Activated CD8-positive, alpha-beta memory T cell treated with anti-CD3 and anti-CD28 coated beads, Interleukin-2, amount 10 ng/mL, durations not matched to agents 7 days and 5 days (primary cell): ENCODE measurements at regions of chr2 and their contacts with region 1.

Region 1: GRCh38 chr2:181241797-181242196 is 215.4 kb upstream of the ITGA4 start:
- DNase-seq: peak; percentile 68
- ATAC-seq: peak; percentile 74
- H3K4me3 Mint-ChIP-seq: peak overlapping the region; percentile 9
- H3K27ac Mint-ChIP-seq: peak overlapping the region; percentile 87
- H3K4me1 Mint-ChIP-seq: peaks cover 61% of the 10 kb centered on the region
- H3K27me3 Mint-ChIP-seq: no peaks in the 10 kb centered on the region

Region 2: DNA sequence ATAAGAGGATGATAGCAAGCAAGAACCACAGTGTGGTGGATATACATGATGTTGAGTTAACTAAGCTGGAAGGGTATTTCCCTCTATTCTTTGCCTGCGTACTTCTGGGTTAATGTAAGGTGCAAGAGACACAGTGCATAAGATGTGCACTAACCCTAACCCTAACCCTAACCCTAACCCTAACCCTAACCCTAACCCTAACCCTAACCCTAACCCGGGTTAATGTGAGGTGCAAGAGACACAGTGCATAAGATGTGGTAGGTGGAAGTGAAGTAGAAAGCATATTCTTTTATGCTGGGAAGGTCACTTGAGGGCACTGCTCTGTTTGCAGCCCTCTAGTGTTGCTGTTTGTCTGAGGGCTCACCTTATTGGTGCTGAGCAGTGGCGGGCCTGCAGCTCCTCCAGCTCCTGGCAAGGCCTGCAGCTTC is 33.9 kb after region 1 on chr2:
- CTCF ChIA-PET with region 1: interaction called, 10 read pairs
- DNase-seq: peak; percentile 77
- ATAC-seq: peak; percentile 94
- H3K4me3 Mint-ChIP-seq: peak overlapping the region; percentile 29
- H3K27ac Mint-ChIP-seq: peak overlapping the region; percentile 85
- H3K4me1 Mint-ChIP-seq: peaks cover 56% of the 10 kb centered on the region
- H3K27me3 Mint-ChIP-seq: no peaks in the 10 kb centered on the region